ENCODE measurements at regions of chr18 and their contacts with region 1.

Region 1: GRCh38 chr18:55634545-55634944 is 46.6 kb upstream of the TCF4 start:
- DNase-seq: no peak
- H3K4me3 ChIP-seq: no peak overlapping the region
- H3K27ac ChIP-seq: no peak overlapping the region
- H3K4me1 ChIP-seq: no peaks in the 10 kb centered on the region
- H3K27me3 ChIP-seq: no peaks in the 10 kb centered on the region
- CTCF ChIP-seq: no peak
- EP300 ChIP-seq: no peak
- POLR2A ChIP-seq: no peak

Region 2: GRCh38 chr18:54359233-54359632 is 1275.3 kb before region 1 on chr18:
- intact Hi-C with region 1: no loop called
- DNase-seq: no peak
- H3K4me3 ChIP-seq: peak overlapping the region; percentile 63
- H3K27ac ChIP-seq: no peak overlapping the region
- H3K4me1 ChIP-seq: peaks cover 2% of the 10 kb centered on the region
- H3K27me3 ChIP-seq: no peaks in the 10 kb centered on the region
- CTCF ChIP-seq: no peak
- EP300 ChIP-seq: no peak
- POLR2A ChIP-seq: no peak

Region 3: DNA sequence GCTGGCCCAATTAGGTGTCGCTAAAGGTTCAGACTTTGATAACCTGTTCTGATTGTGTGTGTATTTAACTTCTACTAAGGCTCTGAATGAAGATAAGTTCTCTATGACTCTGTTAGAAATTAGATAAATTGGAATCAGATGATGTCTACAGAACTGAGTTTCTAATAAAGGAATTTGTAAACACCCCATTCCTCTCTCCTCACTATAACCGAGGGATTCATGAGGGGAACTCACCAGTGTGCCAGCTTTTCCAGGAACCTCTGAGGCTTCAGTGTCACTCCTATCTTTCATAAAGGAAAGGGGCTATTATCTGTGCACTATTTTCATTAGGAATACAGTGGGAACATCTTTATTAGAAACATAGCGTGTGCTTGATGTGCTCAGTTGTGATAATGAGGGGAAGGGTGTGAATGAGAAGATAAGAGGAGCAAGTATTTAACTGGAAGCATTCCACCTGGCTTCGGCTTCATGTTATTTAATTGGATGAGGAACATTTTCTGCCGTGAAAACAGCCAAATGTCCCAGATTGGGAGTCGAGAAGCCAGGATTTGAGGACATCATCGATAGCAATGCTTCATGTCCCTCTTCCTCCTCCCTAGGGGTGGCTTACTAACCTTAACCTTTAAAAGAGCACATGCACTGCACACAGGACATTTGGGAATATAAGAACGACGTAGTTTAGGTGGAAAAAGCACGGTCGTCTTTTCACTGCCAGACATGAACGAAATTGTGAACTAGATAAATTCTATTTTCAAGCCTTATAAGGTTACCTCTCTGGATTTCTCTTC is 38.2 kb after region 1 on chr18:
- intact Hi-C with region 1: no loop called
- DNase-seq: no peak
- H3K4me3 ChIP-seq: no peak overlapping the region
- H3K27ac ChIP-seq: no peak overlapping the region
- H3K4me1 ChIP-seq: peaks cover 1% of the 10 kb centered on the region
- H3K27me3 ChIP-seq: no peaks in the 10 kb centered on the region
- CTCF ChIP-seq: no peak
- EP300 ChIP-seq: no peak
- POLR2A ChIP-seq: no peak

Region 4: DNA sequence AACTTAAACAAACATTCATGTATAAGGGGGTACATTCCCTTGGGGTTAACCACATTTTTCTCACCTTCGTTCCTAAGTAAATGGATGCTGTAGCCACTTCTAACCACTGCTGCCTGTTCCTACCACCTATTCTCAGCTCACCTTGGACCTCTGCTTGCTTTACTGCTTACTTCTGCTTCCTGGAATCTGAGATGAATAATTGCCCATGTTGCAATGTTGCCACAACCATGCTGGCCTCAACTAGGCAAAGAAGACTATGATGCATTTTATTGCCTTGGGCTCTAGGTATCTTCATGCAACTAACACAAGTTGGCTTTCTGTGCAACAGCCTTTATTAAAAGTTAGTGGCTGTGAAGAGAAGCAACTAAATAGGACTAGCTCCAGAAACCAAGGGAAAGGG is 59.7 kb after region 1 on chr18:
- intact Hi-C with region 1: loop called in 1 of 4 experiments (anchors 10 kb)
- DNase-seq: no peak
- H3K4me3 ChIP-seq: no peak overlapping the region
- H3K27ac ChIP-seq: no peak overlapping the region
- H3K4me1 ChIP-seq: no peaks in the 10 kb centered on the region
- H3K27me3 ChIP-seq: no peaks in the 10 kb centered on the region
- CTCF ChIP-seq: no peak
- EP300 ChIP-seq: no peak
- POLR2A ChIP-seq: no peak

Region 5: GRCh38 chr18:55833543-55833942 is 199.0 kb after region 1 on chr18:
- intact Hi-C with region 1: no loop called
- DNase-seq: no peak
- H3K4me3 ChIP-seq: no peak overlapping the region
- H3K27ac ChIP-seq: no peak overlapping the region
- H3K4me1 ChIP-seq: peaks cover 3% of the 10 kb centered on the region
- H3K27me3 ChIP-seq: no peaks in the 10 kb centered on the region
- CTCF ChIP-seq: no peak
- EP300 ChIP-seq: no peak
- POLR2A ChIP-seq: no peak

Measured in ovary (tissue), 10 donors.